ENCODE measurements at regions of chr11 and their contacts with region 1.

Region 1: DNA sequence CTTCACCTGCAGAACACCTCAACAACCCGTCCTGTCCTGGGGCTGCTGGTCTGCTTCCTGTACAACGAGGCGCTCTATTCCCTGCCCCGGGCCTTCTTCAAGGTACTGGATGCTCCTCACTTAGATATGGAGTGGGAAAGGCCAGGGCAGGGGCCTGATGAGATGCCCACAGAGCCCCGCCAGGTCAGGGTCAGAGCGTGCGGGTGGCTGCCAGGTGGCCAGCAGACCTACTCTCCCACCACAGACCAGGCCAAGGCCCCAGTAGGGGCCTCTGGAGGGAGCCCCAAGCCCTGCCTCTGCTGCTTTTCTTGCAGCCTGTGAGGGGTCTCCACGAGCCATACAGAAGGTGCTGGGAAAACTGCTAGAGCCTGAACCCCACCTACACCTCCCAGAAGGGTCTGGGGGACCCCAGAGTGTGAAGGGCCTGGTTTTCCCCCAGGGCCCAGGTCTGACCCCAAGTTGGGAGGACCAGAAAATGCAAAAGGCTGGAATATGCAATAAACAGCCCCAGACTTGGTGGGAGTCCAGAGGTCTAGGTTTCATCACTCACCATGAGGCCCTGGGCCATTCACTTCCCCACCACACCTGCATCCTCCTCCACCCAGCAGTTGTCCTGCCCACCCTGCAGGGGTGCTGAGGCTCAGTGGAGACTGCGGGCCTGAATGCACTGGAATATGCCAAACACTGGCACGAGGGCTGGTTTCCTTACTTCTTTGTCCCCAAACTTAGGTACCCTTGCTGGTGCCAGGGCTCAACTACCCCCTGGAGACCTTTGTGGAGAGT is 14.7 kb downstream of the ZDHHC24 start:
- DNase-seq: no peak
- ATAC-seq: no peak
- H3K4me3 ChIP-seq: no peak overlapping the region
- H3K27ac ChIP-seq: no peak overlapping the region
- H3K4me1 ChIP-seq: no peaks in the 10 kb centered on the region
- H3K27me3 ChIP-seq: no peaks in the 10 kb centered on the region
- CTCF ChIP-seq: no peak

Region 2: DNA sequence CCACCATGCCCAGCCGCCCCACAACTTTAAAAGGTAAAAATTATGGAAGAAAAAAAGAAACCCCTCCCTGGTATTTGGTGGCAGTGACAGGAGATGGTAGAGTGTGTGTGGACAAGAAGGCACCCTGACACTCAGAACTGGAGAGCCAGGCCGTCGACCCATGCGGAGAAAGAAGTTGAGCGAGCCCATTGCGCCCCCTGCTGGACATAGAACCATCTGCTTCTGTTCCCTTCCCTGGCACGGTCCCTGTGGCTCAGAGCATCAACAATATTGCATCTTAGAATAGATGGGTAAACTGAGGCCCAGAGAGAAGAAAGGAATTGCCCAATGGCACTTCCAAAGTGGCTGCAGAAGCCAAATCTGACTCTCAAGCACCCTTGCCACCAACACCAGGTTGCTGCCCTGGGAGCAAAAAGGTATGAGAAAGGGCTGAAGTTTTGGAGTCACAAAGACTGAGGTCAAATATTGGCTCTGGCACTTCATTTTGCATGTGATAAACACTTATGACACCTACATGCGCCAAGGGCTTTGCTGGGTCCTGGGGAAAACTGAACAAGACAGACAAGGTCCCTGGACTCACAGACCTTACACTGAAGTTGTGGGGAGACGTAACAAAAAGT is 101.0 kb before region 1 on chr11:
- CTCF ChIA-PET with region 1: no interaction called
- POLR2A ChIA-PET with region 1: no interaction called
- intact Hi-C with region 1: no loop called
- DNase-seq: peak; percentile 80
- ATAC-seq: peak; percentile 96
- H3K4me3 ChIP-seq: no peak overlapping the region
- H3K27ac ChIP-seq: no peak overlapping the region
- H3K4me1 ChIP-seq: no peaks in the 10 kb centered on the region
- H3K27me3 ChIP-seq: no peaks in the 10 kb centered on the region
- CTCF ChIP-seq: peak; percentile 94

Region 3: DNA sequence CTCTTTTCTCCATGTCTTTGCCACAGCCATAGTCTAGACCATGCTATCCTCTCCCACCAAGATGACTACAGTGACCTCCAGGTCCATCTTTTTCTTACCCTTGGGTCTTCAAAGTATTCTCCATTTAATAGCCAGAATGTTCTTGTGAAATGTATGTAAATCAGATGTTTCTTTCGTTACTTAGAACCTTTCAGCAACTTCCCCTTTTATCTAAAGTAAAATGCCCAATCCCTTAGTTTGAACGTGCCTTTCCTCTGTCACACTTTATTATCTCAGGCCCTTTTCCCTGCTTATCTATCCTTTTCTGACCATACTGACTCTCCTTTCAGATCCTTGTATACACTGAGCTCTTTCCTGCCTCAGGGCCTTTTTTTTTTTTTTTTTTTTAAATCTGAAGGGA is 128.6 kb after region 1 on chr11:
- CTCF ChIA-PET with region 1: no interaction called
- POLR2A ChIA-PET with region 1: interaction called, 14 read pairs
- intact Hi-C with region 1: no loop called
- DNase-seq: no peak
- ATAC-seq: no peak
- H3K4me3 ChIP-seq: no peak overlapping the region
- H3K27ac ChIP-seq: no peak overlapping the region
- H3K4me1 ChIP-seq: no peaks in the 10 kb centered on the region
- H3K27me3 ChIP-seq: no peaks in the 10 kb centered on the region
- CTCF ChIP-seq: no peak

Region 4: GRCh38 chr11:66720223-66720947 is 189.3 kb after region 1 on chr11:
- CTCF ChIA-PET with region 1: no interaction called
- POLR2A ChIA-PET with region 1: no interaction called
- intact Hi-C with region 1: no loop called
- DNase-seq: peak; percentile 99
- ATAC-seq: peak; percentile 96
- H3K4me3 ChIP-seq: peak overlapping the region; percentile 25; the same call in 1 of the 2 replicates
- H3K27ac ChIP-seq: peak overlapping the region; percentile 66
- H3K4me1 ChIP-seq: peaks cover 49% of the 10 kb centered on the region
- H3K27me3 ChIP-seq: no peaks in the 10 kb centered on the region
- CTCF ChIP-seq: no peak

Measured in PC-3 (cell line).